Calu3 (cell line): ENCODE measurements at regions of chr2 and their contacts with region 1.

Region 1: DNA sequence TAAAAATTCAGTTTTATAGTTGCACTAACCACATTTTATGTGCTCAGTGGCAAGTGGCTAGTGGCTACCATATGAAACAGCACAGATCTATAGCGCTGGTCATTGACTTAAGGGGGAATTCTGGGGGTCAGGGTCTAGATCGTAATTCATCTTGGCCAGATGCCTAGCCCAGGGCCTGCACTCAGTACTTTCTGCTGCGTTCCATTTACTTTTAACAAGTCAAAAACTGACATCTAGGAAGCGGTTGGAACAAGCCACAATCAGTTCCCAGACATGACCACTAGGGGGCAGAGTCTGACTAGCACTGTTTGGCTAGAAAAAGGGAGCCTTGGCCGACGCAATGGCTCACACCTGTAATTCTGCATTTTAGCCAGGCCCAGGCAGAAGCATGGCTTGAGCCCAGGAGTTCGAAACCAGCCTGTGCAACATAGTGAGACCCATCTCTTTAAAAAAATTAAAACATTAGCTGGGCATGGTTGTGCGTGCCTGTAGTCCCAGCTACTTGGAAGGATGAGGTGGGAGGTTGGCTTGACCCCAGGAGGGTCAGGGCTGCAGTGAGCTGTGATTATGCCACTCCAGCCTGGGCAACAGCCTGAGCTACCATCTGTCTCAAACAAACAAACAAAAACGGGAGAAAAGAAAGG is 9.0 kb upstream of the TMBIM1 start:
- DNase-seq: peak; percentile 91
- H3K4me3 Mint-ChIP-seq: no peak overlapping the region
- H3K27ac Mint-ChIP-seq: no peak overlapping the region
- H3K4me1 Mint-ChIP-seq: peaks cover 42% of the 10 kb centered on the region
- H3K27me3 Mint-ChIP-seq: no peaks in the 10 kb centered on the region
- CTCF ChIP-seq: peak; percentile 98

Region 2: GRCh38 chr2:218360447-218360846 is 59.1 kb after region 1 on chr2:
- CTCF ChIA-PET with region 1: interaction called, 4 read pairs
- intact Hi-C with region 1: loop called (anchors 1 kb)
- DNase-seq: no peak
- H3K4me3 Mint-ChIP-seq: no peak overlapping the region
- H3K27ac Mint-ChIP-seq: no peak overlapping the region
- H3K4me1 Mint-ChIP-seq: peaks cover 10% of the 10 kb centered on the region
- H3K27me3 Mint-ChIP-seq: no peaks in the 10 kb centered on the region
- CTCF ChIP-seq: no peak

Region 3: DNA sequence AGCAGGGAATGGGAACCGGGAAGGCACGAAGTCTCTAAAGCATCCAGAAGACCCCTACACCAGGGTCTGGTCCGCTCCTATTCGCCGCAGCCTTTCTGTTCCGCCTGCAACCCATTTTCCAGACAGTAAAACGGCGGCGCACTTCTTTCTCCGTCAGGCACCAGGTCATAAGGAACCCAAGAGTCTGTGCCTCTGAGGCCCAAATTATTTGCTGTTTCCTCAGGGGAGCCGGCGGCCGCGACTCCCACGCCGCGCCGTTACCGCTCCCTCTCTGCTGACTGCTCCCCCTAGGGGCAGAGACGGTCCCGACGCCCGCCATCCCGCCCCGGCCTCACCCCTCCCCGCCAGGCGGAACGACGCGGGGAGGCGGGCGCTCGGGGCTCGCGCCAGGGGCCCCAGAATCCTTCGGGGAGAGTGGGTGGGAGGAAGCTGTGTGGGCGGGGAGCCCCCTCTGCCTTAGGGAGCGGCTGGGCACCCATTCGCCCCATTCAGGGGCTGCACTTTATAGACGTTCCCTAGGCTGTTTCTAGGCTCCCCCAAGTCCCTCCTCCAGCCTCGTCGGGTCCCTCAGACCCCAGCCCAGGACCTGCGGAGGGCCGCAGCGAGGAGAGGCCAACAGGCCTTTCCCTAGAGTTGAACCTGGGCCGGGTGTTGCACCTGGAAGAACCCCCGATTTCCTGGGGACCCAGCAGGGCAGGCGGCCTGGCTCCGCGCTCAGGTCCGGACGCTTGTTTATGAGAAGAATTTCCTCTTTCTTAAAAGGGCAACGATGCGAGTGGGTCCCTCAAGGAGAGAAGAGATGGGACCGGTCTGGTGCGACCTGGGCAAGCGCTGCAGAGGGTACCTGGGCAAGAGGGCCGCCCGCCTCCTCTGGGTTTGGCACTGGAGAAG is 94.7 kb after region 1 on chr2:
- CTCF ChIA-PET with region 1: interaction called, 4 read pairs
- intact Hi-C with region 1: loop called (anchors 2 kb)
- DNase-seq: peak; percentile 96
- H3K4me3 Mint-ChIP-seq: peak overlapping the region; percentile 98
- H3K27ac Mint-ChIP-seq: peak overlapping the region; percentile 78
- H3K4me1 Mint-ChIP-seq: peaks cover 26% of the 10 kb centered on the region
- H3K27me3 Mint-ChIP-seq: no peaks in the 10 kb centered on the region
- CTCF ChIP-seq: peak; percentile 97